ENCODE measurements at regions of chr13 and their contacts with region 1.

Region 1: GRCh38 chr13:60482012-60482411 is 85.0 kb downstream of the TDRD3 start:
- ATAC-seq: peak in 6 of 8 experiments; percentile 17 to 53 (median 38)
- H3K4me3 ChIP-seq: no peak overlapping the region
- H3K27ac ChIP-seq: no peak overlapping the region
- H3K4me1 ChIP-seq: no peaks in the 10 kb centered on the region

Region 2: GRCh38 chr13:60617991-60618733 is 136.2 kb after region 1 on chr13:
- in situ Hi-C with region 1: loop called in 2 of 9 experiments (anchors 10 to 25 kb)
- ATAC-seq: peak in 4 of 8 experiments; percentile 60 to 95 (median 93)
- H3K4me3 ChIP-seq: no peak overlapping the region
- H3K27ac ChIP-seq: no peak overlapping the region
- H3K4me1 ChIP-seq: no peaks in the 10 kb centered on the region

Measured in motor neuron (in vitro differentiated cells).